Activated B cell treated with CpG ODN at 0.5 μM for 24 hours (primary cell): ENCODE measurements at regions of chr1 and their contacts with region 1.

Region 1: DNA sequence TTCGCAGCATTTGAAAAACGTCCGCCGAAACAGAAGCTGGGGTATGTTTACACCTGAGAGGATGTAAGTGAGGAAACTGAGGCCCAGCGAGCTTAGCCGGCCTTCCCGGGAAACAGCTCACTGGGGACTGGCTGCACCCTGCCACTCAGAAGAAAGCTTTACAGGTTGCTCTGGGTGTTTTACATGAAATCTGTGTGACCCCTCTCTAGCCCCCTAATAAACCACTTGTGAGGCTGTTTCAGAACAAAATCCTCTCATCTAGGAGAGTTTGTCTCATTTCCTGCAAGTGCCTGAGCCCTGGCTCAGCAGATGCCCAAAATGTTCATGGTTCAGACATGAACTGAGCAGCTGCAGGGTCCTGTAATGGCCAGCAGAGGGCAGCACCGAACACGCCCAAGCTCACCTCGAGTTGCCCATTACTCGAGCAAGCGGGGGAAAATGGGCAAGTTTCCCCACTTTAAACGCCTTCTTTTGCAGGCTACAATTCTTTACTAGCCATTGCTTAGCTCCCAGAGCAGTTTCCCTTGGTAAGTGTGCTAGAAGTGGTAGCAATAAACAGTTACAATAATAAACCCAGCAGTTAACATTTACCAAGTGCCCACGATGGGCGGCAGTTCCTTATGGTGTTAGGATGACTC is 76.4 kb downstream of the FHAD1 start:
- DNase-seq: peak; percentile 46
- ATAC-seq: peak; percentile 87
- H3K4me3 Mint-ChIP-seq: no peak overlapping the region
- H3K27ac Mint-ChIP-seq: no peak overlapping the region
- H3K4me1 Mint-ChIP-seq: no peaks in the 10 kb centered on the region
- H3K27me3 Mint-ChIP-seq: peaks cover 8% of the 10 kb centered on the region
- CTCF ChIP-seq: no peak

Region 2: DNA sequence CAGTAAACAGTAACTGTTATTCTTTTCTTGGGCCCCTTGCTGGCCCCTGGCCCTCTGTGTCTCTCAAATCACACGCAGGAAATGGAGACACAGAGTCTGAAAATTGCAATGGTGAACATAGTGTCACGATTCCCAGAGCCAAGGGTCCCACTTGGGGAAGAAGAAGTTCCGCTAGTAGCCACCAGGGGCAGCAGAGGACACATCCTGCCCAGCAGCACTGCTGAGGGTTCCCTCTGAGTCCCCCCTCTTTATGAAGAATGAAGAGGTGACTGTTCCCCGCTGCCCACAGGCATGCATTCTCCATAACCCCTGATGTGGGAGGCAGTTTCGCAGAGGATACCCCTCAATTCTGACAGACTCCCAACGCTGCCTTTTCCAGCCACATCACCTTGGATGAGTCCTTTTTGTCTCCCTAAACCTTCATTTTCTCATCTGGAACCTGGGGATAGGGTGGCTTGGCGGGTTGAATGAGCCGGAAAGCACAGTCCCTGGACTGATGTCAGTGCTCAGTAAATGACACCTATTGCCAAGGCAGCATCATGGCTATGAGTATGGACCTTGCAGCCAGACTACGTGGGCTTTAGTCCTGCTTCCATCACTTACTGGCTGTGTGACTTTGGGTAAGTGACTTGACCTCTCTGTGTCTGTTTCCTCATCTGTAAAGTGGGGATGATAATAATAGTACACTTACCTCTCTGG is 408.0 kb before region 1 on chr1:
- CTCF ChIA-PET with region 1: no interaction called
- POLR2A ChIA-PET with region 1: no interaction called
- intact Hi-C with region 1: no loop called
- DNase-seq: peak; percentile 18
- ATAC-seq: peak; percentile 40
- H3K4me3 Mint-ChIP-seq: no peak overlapping the region
- H3K27ac Mint-ChIP-seq: no peak overlapping the region
- H3K4me1 Mint-ChIP-seq: peaks cover 3% of the 10 kb centered on the region
- H3K27me3 Mint-ChIP-seq: peaks cover 9% of the 10 kb centered on the region
- CTCF ChIP-seq: peak; percentile 74

Region 3: GRCh38 chr1:15075817-15076216 is 247.7 kb before region 1 on chr1:
- CTCF ChIA-PET with region 1: no interaction called
- POLR2A ChIA-PET with region 1: no interaction called
- intact Hi-C with region 1: no loop called
- DNase-seq: no peak
- ATAC-seq: no peak
- H3K4me3 Mint-ChIP-seq: no peak overlapping the region
- H3K27ac Mint-ChIP-seq: no peak overlapping the region
- H3K4me1 Mint-ChIP-seq: no peaks in the 10 kb centered on the region
- H3K27me3 Mint-ChIP-seq: no peaks in the 10 kb centered on the region
- CTCF ChIP-seq: no peak

Region 4: GRCh38 chr1:15501208-15502032 is 177.9 kb after region 1 on chr1:
- CTCF ChIA-PET with region 1: no interaction called
- POLR2A ChIA-PET with region 1: no interaction called
- intact Hi-C with region 1: loop called (anchors 2 kb)
- DNase-seq: peak; percentile 33
- ATAC-seq: peak; percentile 52
- H3K4me3 Mint-ChIP-seq: no peak overlapping the region
- H3K27ac Mint-ChIP-seq: no peak overlapping the region
- H3K4me1 Mint-ChIP-seq: no peaks in the 10 kb centered on the region
- H3K27me3 Mint-ChIP-seq: no peaks in the 10 kb centered on the region
- CTCF ChIP-seq: no peak